Left colon (tissue), 2 donors: ENCODE measurements at regions of chr3 and their contacts with region 1.

Region 1: DNA sequence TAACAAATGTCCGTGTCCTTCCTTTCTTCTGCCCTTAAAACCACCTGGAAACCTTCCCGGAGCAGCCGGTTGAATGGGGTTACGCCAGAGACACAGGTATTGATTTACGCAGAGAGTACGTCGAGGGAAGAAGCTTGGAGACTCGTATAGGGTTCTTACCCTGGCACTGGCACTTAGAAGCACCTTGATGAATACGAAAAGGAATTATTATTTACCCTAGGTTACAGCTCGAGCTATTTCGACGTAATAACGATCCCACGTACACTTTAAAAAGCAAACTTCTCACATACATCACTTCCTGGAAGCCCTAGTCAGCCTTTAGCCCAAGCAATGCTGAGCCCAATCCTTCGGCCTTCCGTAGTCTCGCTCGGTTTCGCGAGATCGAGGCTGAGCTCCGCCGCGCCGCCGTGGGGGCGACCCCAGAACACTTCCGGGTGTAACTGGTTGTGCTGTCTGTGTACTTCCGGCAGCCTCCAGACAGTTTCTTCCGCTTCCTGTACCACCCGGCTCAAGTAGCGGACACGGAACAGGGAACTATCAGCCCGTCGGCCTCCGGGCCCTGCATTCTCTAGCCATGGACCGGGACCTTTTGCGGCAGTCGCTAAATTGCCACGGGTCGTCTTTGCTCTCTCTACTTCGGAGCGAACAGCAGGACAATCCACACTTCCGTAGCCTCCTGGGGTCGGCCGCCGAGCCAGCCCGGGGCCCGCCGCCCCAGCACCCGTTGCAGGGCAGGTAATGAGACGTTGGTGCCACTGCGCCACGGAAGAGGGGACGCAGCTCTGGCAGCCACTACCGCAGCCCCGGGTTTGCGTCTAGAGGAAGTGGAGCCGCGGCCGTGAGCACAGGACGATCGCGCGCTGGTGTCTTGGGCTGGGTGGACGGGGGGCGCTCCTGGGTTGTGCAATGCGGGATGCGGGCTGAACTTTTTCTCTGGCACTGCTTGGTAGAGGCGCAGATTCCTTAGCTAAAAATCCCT is at the start of gene TTC14:
- DNase-seq: peak; percentile 92
- ATAC-seq: peak; percentile 99
- total RNA-seq, gene TTC14: 31.6 to 32.4 TPM

Region 2: GRCh38 chr3:179613807-179614206 is 988.2 kb before region 1 on chr3:
- intact Hi-C with region 1: loop called in 1 of 2 experiments (anchors 10 kb)
- DNase-seq: no peak
- ATAC-seq: no peak